ENCODE measurements at regions of chr3 and their contacts with region 1.

Region 1: GRCh38 chr3:28328188-28329151 is 20.1 kb upstream of the ZCWPW2 start:
- DNase-seq: no peak
- H3K4me3 Mint-ChIP-seq: no peak overlapping the region
- H3K27ac Mint-ChIP-seq: no peak overlapping the region
- H3K4me1 Mint-ChIP-seq: peaks cover 25% of the 10 kb centered on the region
- H3K27me3 Mint-ChIP-seq: no peaks in the 10 kb centered on the region

Region 2: DNA sequence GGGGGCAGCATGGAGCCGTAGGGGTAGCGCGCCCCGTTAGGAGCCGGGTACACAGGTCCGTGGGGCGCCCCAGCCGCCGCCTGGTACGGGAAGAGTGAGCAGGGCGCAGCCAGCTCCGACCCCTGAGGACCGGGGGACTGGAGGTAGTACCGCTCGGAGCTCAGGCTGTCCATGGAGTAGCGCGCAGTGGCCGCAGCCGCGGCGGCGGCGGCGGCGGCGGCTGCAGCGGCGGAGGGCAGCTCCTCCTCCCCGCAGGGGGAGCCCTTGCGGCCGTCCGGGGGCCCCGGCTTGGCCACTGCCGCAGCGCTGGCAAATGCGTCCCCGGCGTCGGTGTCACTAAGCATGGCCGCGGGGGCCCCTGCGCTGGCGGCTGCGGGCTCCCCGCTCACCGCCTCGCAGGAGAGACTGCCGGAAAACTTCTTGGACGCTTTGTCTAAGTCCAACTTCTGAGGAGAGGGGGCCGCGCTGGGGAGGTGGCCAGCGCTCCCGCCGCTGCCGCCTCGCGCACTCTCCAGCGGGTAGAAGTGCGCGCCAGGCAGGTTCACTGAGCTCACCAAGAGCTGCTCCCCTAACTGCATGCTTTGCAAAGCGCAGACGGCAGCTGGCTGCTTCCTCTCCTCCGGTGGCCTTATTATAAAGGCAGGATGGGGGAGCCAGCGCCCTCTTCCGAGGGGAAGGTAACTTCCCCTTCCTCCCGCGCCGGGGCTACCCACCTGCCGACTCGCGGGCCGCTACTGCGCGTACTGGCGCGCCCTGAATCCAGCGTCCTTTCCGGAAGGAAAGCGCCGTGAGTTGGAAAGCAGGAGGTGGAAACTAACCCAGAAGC is 606.5 kb before region 1 on chr3 and contains the start of gene EOMES:
- CTCF ChIA-PET with region 1: interaction called, 16 read pairs
- POLR2A ChIA-PET with region 1: no interaction called
- DNase-seq: peak; percentile 74
- H3K4me3 Mint-ChIP-seq: peak within 1 kb of the TSS; percentile 79
- H3K27ac Mint-ChIP-seq: peak within 1 kb of the TSS; percentile 67
- H3K4me1 Mint-ChIP-seq: peaks cover 34% of the 10 kb centered on the region
- H3K27me3 Mint-ChIP-seq: peaks cover 89% of the 10 kb centered on the region
- total RNA-seq, gene EOMES: 0.50 to 0.52 TPM

Region 3: DNA sequence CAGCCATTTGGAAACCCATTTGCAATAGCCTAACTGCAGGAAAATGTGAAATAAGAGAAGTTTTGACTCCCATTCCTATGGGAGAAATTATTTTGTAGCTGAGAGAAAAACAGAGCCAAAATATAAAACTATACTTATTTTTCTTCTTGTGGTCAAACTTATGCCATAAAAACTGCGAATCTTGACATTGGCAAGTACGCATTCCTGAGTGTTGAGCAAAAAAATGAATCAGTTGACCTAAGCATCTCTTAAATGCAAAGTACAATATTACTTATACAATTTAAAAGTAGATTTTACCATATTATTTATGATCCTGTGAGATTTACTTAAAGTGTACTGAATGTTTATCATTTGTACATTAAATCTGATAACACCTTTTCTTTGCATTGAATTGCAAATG is 137.1 kb before region 1 on chr3:
- CTCF ChIA-PET with region 1: no interaction called
- POLR2A ChIA-PET with region 1: no interaction called
- DNase-seq: no peak
- H3K4me3 Mint-ChIP-seq: no peak overlapping the region
- H3K27ac Mint-ChIP-seq: no peak overlapping the region
- H3K4me1 Mint-ChIP-seq: no peaks in the 10 kb centered on the region
- H3K27me3 Mint-ChIP-seq: no peaks in the 10 kb centered on the region